ENCODE measurements at regions of chr6 and their contacts with region 1.

Region 1: GRCh38 chr6:32337186-32337805 is 34.4 kb downstream of the TSBP1 start:
- DNase-seq: no peak
- ATAC-seq: peak; percentile 45
- H3K4me3 Mint-ChIP-seq: no peak overlapping the region
- H3K27ac Mint-ChIP-seq: no peak overlapping the region
- H3K4me1 Mint-ChIP-seq: peaks cover 31% of the 10 kb centered on the region
- H3K27me3 Mint-ChIP-seq: no peaks in the 10 kb centered on the region
- CTCF ChIP-seq: no peak

Region 2: GRCh38 chr6:32255199-32256153 is 81.8 kb before region 1 on chr6:
- CTCF ChIA-PET with region 1: no interaction called
- POLR2A ChIA-PET with region 1: no interaction called
- intact Hi-C with region 1: loop called (anchors 5 kb)
- DNase-seq: peak; percentile 54
- ATAC-seq: peak; percentile 79
- H3K4me3 Mint-ChIP-seq: peak overlapping the region; percentile 84
- H3K27ac Mint-ChIP-seq: peak overlapping the region; percentile 92
- H3K4me1 Mint-ChIP-seq: peaks cover 77% of the 10 kb centered on the region
- H3K27me3 Mint-ChIP-seq: no peaks in the 10 kb centered on the region
- CTCF ChIP-seq: peak; percentile 39

Region 3: GRCh38 chr6:32369675-32370074 is 32.4 kb after region 1 on chr6:
- CTCF ChIA-PET with region 1: no interaction called
- POLR2A ChIA-PET with region 1: no interaction called
- intact Hi-C with region 1: loop called (anchors 5 kb)
- DNase-seq: no peak
- ATAC-seq: no peak
- H3K4me3 Mint-ChIP-seq: no peak overlapping the region
- H3K27ac Mint-ChIP-seq: no peak overlapping the region
- H3K4me1 Mint-ChIP-seq: no peaks in the 10 kb centered on the region
- H3K27me3 Mint-ChIP-seq: no peaks in the 10 kb centered on the region
- CTCF ChIP-seq: no peak